ENCODE measurements at regions of chr17 and their contacts with region 1.

Region 1: GRCh38 chr17:75430159-75430974 is 24.9 kb upstream of the GRB2 start:
- DNase-seq: no peak
- H3K4me3 ChIP-seq: no peak overlapping the region
- H3K27ac ChIP-seq: no peak overlapping the region
- H3K4me1 ChIP-seq: peaks cover 3% of the 10 kb centered on the region
- H3K27me3 ChIP-seq: peaks cover 3 to 6% of the 10 kb centered on the region in 2 experiments
- CTCF ChIP-seq: no peak
- POLR2A ChIP-seq: no peak

Region 2: DNA sequence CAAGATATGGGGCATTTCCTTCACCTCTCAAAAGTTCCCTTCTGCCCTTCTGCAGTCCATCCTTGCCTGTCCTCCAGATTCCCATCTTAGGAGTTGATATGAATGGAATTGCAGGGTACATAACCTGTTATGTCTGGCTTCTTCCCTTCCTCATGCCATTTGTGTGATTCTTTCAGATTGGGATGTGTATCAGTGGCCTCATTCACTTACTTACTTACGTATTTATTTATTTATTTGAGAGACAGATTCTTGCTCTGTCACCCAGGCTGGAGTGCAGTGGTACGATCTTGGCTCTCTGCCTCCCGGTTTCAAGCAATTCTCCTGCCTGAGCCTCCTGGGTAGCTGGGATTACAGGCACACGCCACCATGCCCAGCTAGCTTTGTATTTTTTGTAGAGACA is 19.9 kb after region 1 on chr17:
- CTCF ChIA-PET with region 1: no interaction called
- POLR2A ChIA-PET with region 1: no interaction called
- dilution Hi-C with region 1: no loop called
- intact Hi-C with region 1: no loop called
- DNase-seq: no peak
- H3K4me3 ChIP-seq: no peak overlapping the region
- H3K27ac ChIP-seq: no peak overlapping the region
- H3K4me1 ChIP-seq: no peaks in the 10 kb centered on the region
- H3K27me3 ChIP-seq: no peaks in the 10 kb centered on the region
- CTCF ChIP-seq: no peak
- POLR2A ChIP-seq: no peak

Region 3: GRCh38 chr17:75476271-75476671 is 45.9 kb after region 1 on chr17:
- CTCF ChIA-PET with region 1: interaction called, 3 read pairs
- POLR2A ChIA-PET with region 1: interaction called, 3 read pairs
- dilution Hi-C with region 1: no loop called
- intact Hi-C with region 1: loop called (anchors 2 kb)
- DNase-seq: peak; percentile 13
- H3K4me3 ChIP-seq: no peak overlapping the region
- H3K27ac ChIP-seq: no peak overlapping the region
- H3K4me1 ChIP-seq: peaks cover 11% of the 10 kb centered on the region
- H3K27me3 ChIP-seq: no peaks in the 10 kb centered on the region
- CTCF ChIP-seq: no peak
- POLR2A ChIP-seq: no peak

Region 4: GRCh38 chr17:75487351-75488070 is 57.1 kb after region 1 on chr17:
- CTCF ChIA-PET with region 1: interaction called, 8 read pairs
- POLR2A ChIA-PET with region 1: no interaction called
- dilution Hi-C with region 1: no loop called
- intact Hi-C with region 1: loop called (anchors 1 kb)
- DNase-seq: no peak
- H3K4me3 ChIP-seq: no peak overlapping the region
- H3K27ac ChIP-seq: no peak overlapping the region
- H3K4me1 ChIP-seq: peaks cover 9% of the 10 kb centered on the region
- H3K27me3 ChIP-seq: no peaks in the 10 kb centered on the region
- CTCF ChIP-seq: no peak
- POLR2A ChIP-seq: no peak

Region 5: DNA sequence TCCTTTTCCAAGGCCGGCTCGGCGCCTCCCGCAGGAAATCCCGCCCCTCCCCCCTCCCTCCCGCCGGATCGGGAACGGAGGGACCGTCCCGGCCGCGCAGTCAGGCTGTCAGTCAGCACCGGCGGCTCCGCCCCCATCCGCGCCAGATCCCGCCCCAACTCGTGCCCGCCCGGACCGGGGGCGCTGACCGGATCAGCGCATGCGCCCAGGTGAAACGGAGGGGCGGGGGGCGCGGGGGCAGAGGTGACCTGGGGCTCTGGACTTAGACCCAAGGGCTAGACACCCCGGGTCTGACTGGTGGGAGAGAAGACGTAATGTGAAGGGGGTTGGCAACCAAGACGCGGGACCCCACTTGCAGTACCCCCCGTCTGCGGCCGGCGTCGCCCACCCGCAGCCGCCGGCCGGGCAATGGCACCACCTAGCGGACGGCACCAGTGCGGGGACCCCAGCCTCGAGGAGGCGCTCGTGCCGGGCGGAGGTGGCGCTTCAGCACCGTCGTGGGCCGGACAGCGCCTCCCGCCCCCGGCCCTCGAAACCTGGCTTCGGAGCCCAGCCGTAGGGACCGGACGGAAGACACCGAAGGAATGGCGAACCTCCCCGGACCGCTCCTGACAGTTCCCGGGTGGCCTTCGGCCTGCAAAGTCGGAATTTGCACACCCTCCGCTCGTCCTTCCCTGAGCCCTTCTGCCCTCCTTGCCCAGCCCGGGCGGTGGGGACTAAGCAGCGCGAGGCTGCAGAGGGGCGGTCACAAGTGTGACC is 85.3 kb after region 1 on chr17 and contains the start of gene CASKIN2:
- CTCF ChIA-PET with region 1: interaction called, 7 read pairs
- POLR2A ChIA-PET with region 1: no interaction called
- dilution Hi-C with region 1: no loop called
- intact Hi-C with region 1: loop called (anchors 1 kb)
- DNase-seq: peak; percentile 92
- H3K4me3 ChIP-seq: peak within 1 kb of the TSS; percentile 57 to 72 (median 70)
- H3K27ac ChIP-seq: peak within 1 kb of the TSS; percentile 59
- H3K4me1 ChIP-seq: peaks cover 46% of the 10 kb centered on the region
- H3K27me3 ChIP-seq: no peaks in the 10 kb centered on the region
- CTCF ChIP-seq: peak; percentile 100
- POLR2A ChIP-seq: no peak
- total RNA-seq, gene CASKIN2: 34.6 and 37.6 TPM in 2 replicates

Region 6: GRCh38 chr17:75524953-75525719 is 94.8 kb after region 1 on chr17 and contains the start of gene LLGL2:
- CTCF ChIA-PET with region 1: no interaction called
- POLR2A ChIA-PET with region 1: no interaction called
- dilution Hi-C with region 1: no loop called
- intact Hi-C with region 1: loop called (anchors 2 kb)
- DNase-seq: peak; percentile 44
- H3K4me3 ChIP-seq: peak within 1 kb of the TSS; percentile 39 to 57 (median 52)
- H3K27ac ChIP-seq: no peak within 1 kb of the TSS
- H3K4me1 ChIP-seq: peaks cover 7% of the 10 kb centered on the region
- H3K27me3 ChIP-seq: no peaks in the 10 kb centered on the region
- CTCF ChIP-seq: peak; percentile 10 to 44
- POLR2A ChIP-seq: no peak
- total RNA-seq, gene LLGL2: 5.4 and 5.8 TPM in 2 replicates

Region 7: GRCh38 chr17:75589012-75589918 is 158.9 kb after region 1 on chr17:
- CTCF ChIA-PET with region 1: no interaction called
- POLR2A ChIA-PET with region 1: no interaction called
- dilution Hi-C with region 1: no loop called
- intact Hi-C with region 1: loop called (anchors 1 kb)
- DNase-seq: peak; percentile 74
- H3K4me3 ChIP-seq: peak overlapping the region in 2 of 3 experiments; percentile 48 to 55
- H3K27ac ChIP-seq: peak overlapping the region; percentile 68
- H3K4me1 ChIP-seq: peaks cover 3% of the 10 kb centered on the region
- H3K27me3 ChIP-seq: no peaks in the 10 kb centered on the region
- CTCF ChIP-seq: peak; percentile 38 to 47
- POLR2A ChIP-seq: peak; percentile 42